Heart left ventricle (tissue), 16 donors: ENCODE measurements at regions of chr17 and their contacts with region 1.

Region 1: DNA sequence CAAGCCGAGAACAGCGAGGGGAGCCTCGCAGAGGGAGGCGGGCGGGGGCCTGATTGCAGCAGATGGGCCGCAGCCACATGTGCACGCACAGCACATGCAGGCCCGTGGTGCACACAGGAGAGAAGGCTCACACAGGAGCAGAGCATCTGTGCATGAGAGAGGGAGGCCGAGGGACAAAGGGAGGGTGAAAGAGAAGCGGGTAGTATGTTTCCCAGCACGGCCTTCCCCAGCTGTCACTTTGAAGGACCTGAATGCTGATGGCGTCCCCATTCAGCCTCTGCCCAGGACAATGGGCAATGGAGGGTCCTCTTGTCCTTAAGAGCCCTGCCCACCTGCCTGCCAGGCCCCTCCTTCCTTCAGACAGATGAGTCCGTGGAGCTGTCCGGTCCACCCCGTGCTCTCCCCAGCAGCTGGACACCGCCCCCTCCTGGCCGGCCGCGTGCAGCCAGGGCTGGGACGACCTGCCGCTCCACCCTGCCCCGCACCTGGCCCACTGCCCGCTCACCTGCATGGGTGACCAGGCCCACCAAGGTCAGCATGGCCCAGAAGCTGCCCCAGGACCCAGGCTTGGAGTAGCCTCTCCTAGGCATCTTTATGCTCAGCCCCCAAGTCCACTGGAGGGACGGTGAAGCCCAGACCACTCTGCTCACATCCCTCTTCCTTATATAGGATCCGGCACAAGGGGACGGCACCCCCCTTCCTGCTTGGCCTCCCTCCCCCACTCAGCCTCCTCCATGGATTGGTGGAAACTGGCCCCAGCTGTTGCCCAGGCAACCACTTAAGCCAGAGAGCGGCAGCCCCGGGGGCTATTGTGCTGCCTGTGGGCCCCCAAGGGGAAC is at the start of gene BTBD17:
- DNase-seq: peak; percentile 54 to 81 (median 61)
- ATAC-seq: peak; percentile 79 to 91 (median 82)
- H3K4me3 ChIP-seq: no peak within 1 kb of the TSS
- H3K27ac ChIP-seq: no peak within 1 kb of the TSS
- H3K4me1 ChIP-seq: peaks cover 0 to 24% (median 7%) of the 10 kb centered on the region in 12 donors
- H3K27me3 ChIP-seq: peaks cover 18 to 61% (median 52%) of the 10 kb centered on the region in 9 donors
- CTCF ChIP-seq: peak; percentile 63 to 84 (median 76)
- POLR2A ChIP-seq: no peak
- total RNA-seq, gene BTBD17: not detected

Region 2: GRCh38 chr17:74203439-74204240 is 157.8 kb before region 1 on chr17 and contains the start of gene RPL38:
- intact Hi-C with region 1: loop called in 3 of 10 experiments (anchors 1 to 5 kb)
- DNase-seq: peak; percentile 94 to 97 (median 96)
- ATAC-seq: peak; percentile 81 to 89 (median 86)
- H3K4me3 ChIP-seq: peak within 1 kb of the TSS; percentile 74 to 97 (median 90)
- H3K27ac ChIP-seq: peak within 1 kb of the TSS; percentile 58 to 93 (median 81)
- H3K4me1 ChIP-seq: peaks cover 0 to 55% (median 37%) of the 10 kb centered on the region in 12 donors
- H3K27me3 ChIP-seq: peaks cover 0 to 23% (median 17%) of the 10 kb centered on the region in 9 donors
- CTCF ChIP-seq: peak; percentile 86 to 98 (median 94)
- POLR2A ChIP-seq: peak in 1 of 2 donors; percentile 85
- total RNA-seq, gene RPL38: 244 to 836 (median 739) TPM

Region 3: GRCh38 chr17:74296548-74296936 is 64.9 kb before region 1 on chr17:
- intact Hi-C with region 1: loop called in 7 of 10 experiments (anchors 1 to 5 kb)
- DNase-seq: peak; percentile 68 to 87 (median 76)
- ATAC-seq: peak; percentile 74 to 84 (median 81)
- H3K4me3 ChIP-seq: peak overlapping the region in 1 of 12 donors; percentile 5
- H3K27ac ChIP-seq: peak overlapping the region; percentile 53 to 97 (median 84)
- H3K4me1 ChIP-seq: peaks cover 0 to 18% (median 10%) of the 10 kb centered on the region in 12 donors
- H3K27me3 ChIP-seq: no peaks in the 10 kb centered on the region
- CTCF ChIP-seq: peak; percentile 50 to 78 (median 66)
- POLR2A ChIP-seq: no peak